Activated CD4-positive, alpha-beta T cell treated with anti-CD3 and anti-CD28 coated beads, Interleukin-2, amount 10 ng/mL, durations not matched to agents 24 days and 14 days (primary cell): ENCODE measurements at regions of chr7 and their contacts with region 1.

Region 1: DNA sequence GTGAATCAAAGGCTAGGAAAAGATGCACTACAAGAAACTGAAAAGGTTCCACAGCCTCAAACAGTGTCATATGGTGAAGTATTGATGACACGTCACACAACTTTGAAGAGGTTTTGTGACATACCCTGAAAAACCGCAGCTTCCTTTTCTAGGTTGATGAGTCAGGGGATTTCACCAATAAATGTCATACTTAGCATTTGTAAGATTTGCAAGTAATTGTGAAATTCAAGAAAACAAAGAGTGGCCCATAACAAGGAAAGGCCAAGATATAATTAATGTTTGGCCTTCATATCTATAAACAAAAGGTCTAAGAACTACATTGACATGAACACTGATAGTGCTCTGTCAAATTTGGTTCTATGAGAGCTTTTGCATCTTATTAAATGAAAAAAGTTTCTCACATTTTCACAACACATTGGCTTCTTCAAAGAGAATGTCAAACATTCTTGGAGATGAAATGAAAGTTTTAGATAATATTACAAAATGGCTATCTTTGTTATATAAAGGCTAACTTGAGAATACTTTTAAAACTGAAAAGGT is 62.0 kb upstream of the NAMPT start:
- DNase-seq: peak; percentile 93
- H3K4me3 Mint-ChIP-seq: peak overlapping the region; percentile 72
- H3K27ac Mint-ChIP-seq: peak overlapping the region; percentile 99
- H3K4me1 Mint-ChIP-seq: peaks cover 48% of the 10 kb centered on the region
- H3K27me3 Mint-ChIP-seq: no peaks in the 10 kb centered on the region

Region 2: GRCh38 chr7:106205621-106206222 is 141.0 kb before region 1 on chr7:
- intact Hi-C with region 1: no loop called
- DNase-seq: no peak
- H3K4me3 Mint-ChIP-seq: no peak overlapping the region
- H3K27ac Mint-ChIP-seq: no peak overlapping the region
- H3K4me1 Mint-ChIP-seq: peaks cover 4% of the 10 kb centered on the region
- H3K27me3 Mint-ChIP-seq: peaks cover 22% of the 10 kb centered on the region

Region 3: GRCh38 chr7:106285051-106285854 is 61.5 kb before region 1 on chr7:
- intact Hi-C with region 1: loop called (anchors 1 kb)
- DNase-seq: peak; percentile 99
- H3K4me3 Mint-ChIP-seq: peak overlapping the region; percentile 93
- H3K27ac Mint-ChIP-seq: peak overlapping the region; percentile 99
- H3K4me1 Mint-ChIP-seq: peaks cover 32% of the 10 kb centered on the region
- H3K27me3 Mint-ChIP-seq: no peaks in the 10 kb centered on the region

Region 4: GRCh38 chr7:106405697-106406141 is 59.0 kb after region 1 on chr7:
- intact Hi-C with region 1: loop called (anchors 1 kb)
- DNase-seq: no peak
- H3K4me3 Mint-ChIP-seq: peak overlapping the region; percentile 16
- H3K27ac Mint-ChIP-seq: peak overlapping the region; percentile 49
- H3K4me1 Mint-ChIP-seq: peaks cover 18% of the 10 kb centered on the region
- H3K27me3 Mint-ChIP-seq: peaks cover 3% of the 10 kb centered on the region

Region 5: GRCh38 chr7:106461993-106462859 is 115.5 kb after region 1 on chr7:
- intact Hi-C with region 1: loop called (anchors 1 kb)
- DNase-seq: peak; percentile 76
- H3K4me3 Mint-ChIP-seq: no peak overlapping the region
- H3K27ac Mint-ChIP-seq: no peak overlapping the region
- H3K4me1 Mint-ChIP-seq: peaks cover 19% of the 10 kb centered on the region
- H3K27me3 Mint-ChIP-seq: no peaks in the 10 kb centered on the region

Region 6: DNA sequence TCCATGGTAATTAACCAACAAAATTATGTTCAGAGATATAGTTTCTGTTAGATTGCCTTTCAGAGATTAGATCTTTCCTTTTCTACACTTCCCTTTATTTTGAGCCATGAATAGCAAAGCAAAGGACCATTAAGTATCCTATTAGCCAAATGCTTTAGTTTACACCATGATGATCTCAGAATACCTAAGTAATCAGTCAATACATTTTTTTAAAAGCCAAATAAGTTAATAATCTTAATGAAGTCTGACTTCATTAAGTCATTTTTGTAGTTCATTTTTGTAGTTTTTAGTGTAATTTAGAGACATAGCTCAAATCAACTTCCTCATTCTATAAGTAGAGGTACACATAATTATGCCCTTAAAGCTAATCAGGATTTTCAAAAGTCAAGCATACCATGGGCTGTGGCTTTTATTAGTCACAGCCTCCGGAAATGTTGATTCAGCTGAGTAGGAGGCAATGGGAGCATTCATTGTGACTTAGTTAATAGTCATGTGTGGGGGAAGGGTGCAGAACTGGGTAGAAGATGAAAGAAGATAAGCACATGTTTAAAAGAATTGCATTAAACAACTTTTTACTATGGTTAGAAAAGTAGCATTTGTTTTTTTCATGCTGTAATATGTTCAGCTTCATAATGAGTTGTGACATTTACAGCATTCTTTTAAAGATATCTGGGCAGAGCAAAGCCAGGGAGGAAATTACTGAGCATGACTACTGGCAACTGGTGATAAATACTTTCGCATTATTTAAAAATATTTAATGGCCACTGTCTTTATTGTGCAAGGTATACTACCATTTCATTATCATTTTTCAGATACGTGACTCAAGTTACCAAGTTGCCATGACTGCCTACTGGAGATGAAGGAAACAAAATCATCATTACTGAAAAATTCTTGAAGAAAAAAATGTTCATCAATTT is 371.5 kb after region 1 on chr7:
- intact Hi-C with region 1: loop called (anchors 1 kb)
- DNase-seq: peak; percentile 85
- H3K4me3 Mint-ChIP-seq: no peak overlapping the region
- H3K27ac Mint-ChIP-seq: no peak overlapping the region
- H3K4me1 Mint-ChIP-seq: peaks cover 22% of the 10 kb centered on the region
- H3K27me3 Mint-ChIP-seq: no peaks in the 10 kb centered on the region

Region 7: GRCh38 chr7:107213193-107213788 is 866.5 kb after region 1 on chr7:
- intact Hi-C with region 1: no loop called
- DNase-seq: no peak
- H3K4me3 Mint-ChIP-seq: no peak overlapping the region
- H3K27ac Mint-ChIP-seq: no peak overlapping the region
- H3K4me1 Mint-ChIP-seq: no peaks in the 10 kb centered on the region
- H3K27me3 Mint-ChIP-seq: no peaks in the 10 kb centered on the region